ENCODE measurements at regions of chr10 and their contacts with region 1.

Region 1: GRCh38 chr10:102503281-102504220 is at the start of gene SUFU:
- DNase-seq: peak; percentile 90
- H3K4me3 ChIP-seq: peak within 1 kb of the TSS; percentile 96
- CTCF ChIP-seq: peak; percentile 86

Region 2: DNA sequence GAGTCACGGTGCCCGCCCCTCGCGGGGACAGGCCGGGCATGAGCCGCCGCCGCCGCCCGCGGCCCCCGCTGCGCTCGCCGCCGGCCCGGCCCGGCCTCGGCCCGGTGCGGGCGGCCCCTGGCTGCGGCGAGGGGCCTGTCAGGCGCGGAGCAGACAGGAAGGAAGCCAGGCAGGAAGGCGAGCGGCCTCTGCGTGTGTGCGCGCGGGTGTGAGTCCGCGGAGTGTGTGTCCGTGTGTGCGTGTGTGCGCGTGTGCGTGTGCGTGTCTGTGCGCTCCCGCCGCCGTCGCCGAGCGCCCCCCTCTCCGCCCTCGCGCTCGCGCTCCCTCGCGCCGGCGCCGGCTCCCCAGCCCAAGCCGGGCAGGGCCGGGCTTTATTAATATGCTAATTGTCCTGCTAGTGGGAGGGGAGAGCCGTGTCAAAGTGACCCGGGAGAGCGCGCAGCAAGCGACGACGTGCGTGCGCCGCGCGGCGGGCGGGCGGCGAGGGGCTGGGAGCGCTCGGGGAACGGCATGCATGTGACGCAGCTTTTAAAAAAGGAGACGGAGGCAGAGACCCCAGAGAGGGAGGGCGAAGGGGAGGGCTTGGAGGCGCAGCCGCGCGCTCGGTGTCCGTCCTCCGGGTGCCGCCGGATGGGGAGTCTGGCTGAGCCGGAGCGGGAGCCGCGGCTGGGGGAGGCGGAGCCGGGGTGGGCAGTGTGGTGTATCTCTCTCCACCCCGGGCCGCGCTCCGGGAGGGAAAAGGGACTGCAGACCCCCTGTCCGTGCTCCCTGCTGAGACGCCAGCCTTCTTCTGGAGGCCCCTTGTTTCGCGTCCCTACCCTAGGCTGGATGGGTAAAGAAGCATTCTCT is 383.2 kb before region 1 on chr10 and contains the start of gene LDB1:
- CTCF ChIA-PET with region 1: no interaction called
- POLR2A ChIA-PET with region 1: no interaction called
- DNase-seq: no peak
- H3K4me3 ChIP-seq: peak within 1 kb of the TSS; percentile 91
- CTCF ChIP-seq: no peak

Region 3: GRCh38 chr10:102517553-102517952 is 14.0 kb after region 1 on chr10:
- CTCF ChIA-PET with region 1: interaction called, 34 read pairs
- POLR2A ChIA-PET with region 1: interaction called, 4 read pairs
- DNase-seq: no peak
- H3K4me3 ChIP-seq: no peak overlapping the region
- CTCF ChIP-seq: no peak

Region 4: GRCh38 chr10:102523250-102524029 is 19.9 kb after region 1 on chr10:
- CTCF ChIA-PET with region 1: interaction called, 34 read pairs
- POLR2A ChIA-PET with region 1: no interaction called
- DNase-seq: no peak
- H3K4me3 ChIP-seq: no peak overlapping the region
- CTCF ChIP-seq: no peak

Region 5: GRCh38 chr10:102596506-102596971 is 93.0 kb after region 1 on chr10:
- CTCF ChIA-PET with region 1: interaction called, 64 read pairs
- POLR2A ChIA-PET with region 1: no interaction called
- DNase-seq: no peak
- H3K4me3 ChIP-seq: no peak overlapping the region
- CTCF ChIP-seq: peak; percentile 74

Region 6: DNA sequence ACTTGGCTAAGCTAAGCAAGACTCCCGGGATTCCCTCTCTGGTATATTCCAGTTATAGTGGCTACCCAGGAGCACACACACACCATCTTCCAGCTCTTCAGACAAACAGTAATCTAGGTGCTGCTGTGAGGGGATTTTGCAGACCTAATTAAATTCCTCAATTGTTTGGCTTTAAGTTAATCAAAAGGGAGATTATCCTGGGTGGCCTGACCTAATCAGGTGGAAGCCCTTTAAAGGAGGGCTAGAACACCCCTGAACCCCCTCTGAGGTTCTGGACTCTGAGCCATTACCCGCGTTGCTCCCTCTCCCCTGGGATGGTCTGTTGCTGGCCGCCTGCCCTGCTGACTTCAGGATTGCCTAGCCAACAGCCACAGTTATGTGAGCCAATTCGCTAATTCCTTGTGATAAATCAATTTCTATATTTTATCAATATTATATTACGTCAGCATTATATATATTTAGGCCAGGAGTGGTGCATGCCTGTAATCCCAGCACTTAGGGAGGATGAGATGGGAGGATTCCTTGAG is 217.3 kb after region 1 on chr10:
- CTCF ChIA-PET with region 1: no interaction called
- POLR2A ChIA-PET with region 1: no interaction called
- DNase-seq: no peak
- H3K4me3 ChIP-seq: no peak overlapping the region
- CTCF ChIP-seq: no peak

Measured in AG04449 (cell line).